ENCODE measurements at regions of chr5 and their contacts with region 1.

Region 1: DNA sequence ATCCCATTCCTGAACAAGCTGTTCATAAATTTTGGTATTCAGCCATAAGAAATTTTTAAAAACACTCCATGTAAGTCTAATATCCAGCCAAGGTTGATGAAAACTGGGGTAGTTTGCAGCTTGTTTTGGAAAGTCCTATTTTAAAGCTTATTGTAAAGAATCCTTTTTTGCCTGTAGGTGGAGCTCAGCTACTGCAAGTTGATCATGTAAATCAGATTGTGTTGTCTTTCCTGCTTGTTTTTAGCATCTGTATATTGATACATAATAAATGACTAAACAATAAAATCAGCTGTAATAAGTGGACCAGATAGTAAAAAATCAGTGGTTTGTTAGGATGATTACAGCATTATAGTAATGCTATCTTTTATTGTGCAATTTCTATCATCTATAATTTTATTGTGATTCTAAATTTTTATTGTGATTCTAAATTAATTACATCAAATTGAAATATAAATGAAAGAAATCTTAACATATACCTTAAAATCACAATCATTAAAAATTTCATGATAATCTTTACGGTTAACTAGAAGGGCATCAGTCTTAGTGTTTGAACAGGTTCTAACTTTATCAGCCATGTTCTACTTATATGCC is 42.4 kb downstream of the CWC27 start:
- DNase-seq: no peak
- ATAC-seq: peak in 1 of 2 donors; percentile 47
- H3K4me3 ChIP-seq: no peak overlapping the region
- H3K27ac ChIP-seq: no peak overlapping the region
- H3K4me1 ChIP-seq: peaks cover 8% of the 10 kb centered on the region
- H3K27me3 ChIP-seq: no peaks in the 10 kb centered on the region
- CTCF ChIP-seq: peak; percentile 73

Region 2: DNA sequence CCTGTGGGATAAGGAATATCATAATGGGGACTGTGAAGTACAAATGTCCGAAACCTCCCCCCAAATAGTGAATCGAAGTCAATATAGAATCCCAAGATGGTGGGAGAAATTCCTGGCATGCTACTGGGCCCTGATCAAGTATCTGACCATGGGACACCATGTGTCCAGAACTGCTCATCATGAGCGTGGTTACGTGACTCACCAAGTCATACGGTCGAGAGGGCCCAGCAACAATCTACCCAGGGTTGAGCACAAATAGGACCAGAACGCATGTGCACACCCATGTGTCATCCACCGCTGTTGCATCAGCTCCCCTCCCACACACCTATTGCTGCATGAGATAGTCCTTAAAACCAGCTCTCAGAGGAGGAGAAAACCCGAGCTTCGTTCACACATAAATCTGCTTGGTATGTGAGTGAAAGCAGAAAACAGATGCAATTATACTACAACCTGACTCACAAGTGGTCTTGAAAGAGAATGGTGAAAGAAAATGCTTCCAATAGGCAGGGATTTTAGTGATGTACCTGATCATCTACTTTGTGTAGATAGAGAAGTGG is 310.8 kb after region 1 on chr5:
- intact Hi-C with region 1: no loop called
- DNase-seq: no peak
- ATAC-seq: no peak
- H3K4me3 ChIP-seq: no peak overlapping the region
- H3K27ac ChIP-seq: no peak overlapping the region
- H3K4me1 ChIP-seq: peaks cover 5% of the 10 kb centered on the region
- H3K27me3 ChIP-seq: no peaks in the 10 kb centered on the region
- CTCF ChIP-seq: no peak

Region 3: GRCh38 chr5:65481635-65482295 is 670.6 kb after region 1 on chr5 and contains the start of gene ADAMTS6:
- intact Hi-C with region 1: loop called (anchors 10 kb)
- DNase-seq: peak; percentile 87
- ATAC-seq: peak; percentile 93
- H3K4me3 ChIP-seq: peak within 1 kb of the TSS; percentile 60
- H3K27ac ChIP-seq: peak within 1 kb of the TSS; percentile 76
- H3K4me1 ChIP-seq: peaks cover 18% of the 10 kb centered on the region
- H3K27me3 ChIP-seq: no peaks in the 10 kb centered on the region
- CTCF ChIP-seq: no peak
- total RNA-seq, gene ADAMTS6: 3.0 TPM

Measured in lower lobe of right lung (tissue), 2 donors.